ENCODE measurements at regions of chr2 and their contacts with region 1.

Region 1: DNA sequence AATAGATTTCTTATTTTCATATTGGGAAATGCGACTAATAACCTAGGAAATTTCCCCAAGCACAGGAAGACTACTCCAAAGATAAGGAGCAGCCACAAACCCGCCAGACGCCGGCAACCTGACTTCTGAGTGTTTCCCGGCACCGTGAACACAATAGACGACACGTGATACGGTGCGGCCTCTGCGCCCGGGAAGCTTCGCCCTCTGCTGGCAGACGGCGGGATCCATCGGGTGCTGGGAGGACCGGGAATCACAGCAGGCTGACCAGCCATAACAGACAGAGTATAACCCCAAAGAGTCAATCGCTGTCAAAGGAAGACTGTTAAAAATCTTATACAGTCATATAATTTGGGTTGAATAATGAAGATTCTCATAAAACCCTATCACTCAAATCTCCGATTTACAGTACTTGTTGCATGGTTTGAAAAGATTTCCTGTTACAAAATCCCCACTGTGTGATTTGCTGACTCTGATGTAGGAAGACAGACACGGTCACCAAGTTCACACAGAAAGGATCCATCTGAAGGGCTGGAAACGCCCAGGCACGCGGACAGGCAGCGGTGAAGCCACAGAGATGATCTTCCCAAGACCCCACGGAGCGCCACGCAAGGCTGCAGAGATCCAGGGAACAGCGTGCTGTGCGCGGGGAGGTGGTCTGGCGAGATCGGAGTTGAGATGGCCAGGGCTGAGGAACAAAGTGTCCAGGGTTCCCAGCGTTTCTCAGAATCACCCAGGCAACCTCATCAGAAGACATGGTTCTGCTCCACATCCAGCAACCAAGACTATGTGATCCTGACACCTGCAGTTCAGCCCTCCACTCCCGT is 73.8 kb downstream of the EIPR1 start:
- DNase-seq: peak; percentile 90
- H3K4me3 Mint-ChIP-seq: peak overlapping the region; percentile 21
- H3K27ac Mint-ChIP-seq: peak overlapping the region; percentile 63
- H3K4me1 Mint-ChIP-seq: peaks cover 21% of the 10 kb centered on the region
- H3K27me3 Mint-ChIP-seq: no peaks in the 10 kb centered on the region

Region 2: DNA sequence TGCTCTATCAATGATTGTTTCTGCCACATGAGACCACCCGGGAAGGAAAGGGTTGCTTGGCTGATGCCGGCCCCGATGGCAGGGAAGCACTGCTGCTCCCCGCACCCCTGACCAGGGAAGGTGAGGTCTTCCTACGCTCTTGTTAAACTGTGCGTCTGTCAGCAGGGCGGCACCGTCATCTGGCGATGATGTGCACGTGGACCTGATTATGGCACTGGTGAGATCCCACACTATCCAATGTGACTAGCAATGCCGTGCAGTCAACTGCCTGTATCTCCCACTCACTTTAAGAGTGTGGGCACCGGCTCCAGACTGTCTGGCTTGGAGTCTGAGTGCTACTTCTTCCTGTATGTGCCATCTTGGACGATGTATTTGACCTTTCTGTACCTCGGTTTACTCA is 1181.9 kb before region 1 on chr2:
- CTCF ChIA-PET with region 1: no interaction called
- intact Hi-C with region 1: loop called (anchors 5 kb)
- DNase-seq: no peak
- H3K4me3 Mint-ChIP-seq: no peak overlapping the region
- H3K27ac Mint-ChIP-seq: no peak overlapping the region
- H3K4me1 Mint-ChIP-seq: peaks cover 4% of the 10 kb centered on the region
- H3K27me3 Mint-ChIP-seq: peaks cover 3% of the 10 kb centered on the region

Region 3: GRCh38 chr2:3001615-3002560 is 301.9 kb before region 1 on chr2:
- CTCF ChIA-PET with region 1: no interaction called
- intact Hi-C with region 1: loop called (anchors 2 kb)
- DNase-seq: no peak
- H3K4me3 Mint-ChIP-seq: no peak overlapping the region
- H3K27ac Mint-ChIP-seq: no peak overlapping the region
- H3K4me1 Mint-ChIP-seq: peaks cover 3% of the 10 kb centered on the region
- H3K27me3 Mint-ChIP-seq: peaks cover 30% of the 10 kb centered on the region

Region 4: DNA sequence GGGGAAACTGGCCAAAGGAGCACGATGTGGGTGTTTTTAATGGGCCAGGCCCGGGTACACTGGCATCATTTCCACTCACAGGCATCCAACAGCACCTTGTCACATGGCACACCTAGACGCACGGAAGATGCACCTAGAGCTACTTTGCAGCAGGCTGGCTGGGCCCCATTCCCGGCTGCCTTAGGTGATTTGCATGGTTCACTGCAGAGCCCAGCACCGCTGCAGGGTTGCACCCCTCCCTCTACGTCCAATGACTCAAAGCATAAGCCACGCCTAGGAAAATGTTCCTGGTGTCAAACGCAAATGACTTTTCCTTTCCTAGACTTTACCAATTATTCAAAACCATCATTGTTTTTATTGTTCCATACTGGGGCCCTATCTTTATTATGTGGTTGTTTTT is 149.1 kb before region 1 on chr2:
- CTCF ChIA-PET with region 1: no interaction called
- intact Hi-C with region 1: no loop called
- DNase-seq: no peak
- H3K4me3 Mint-ChIP-seq: no peak overlapping the region
- H3K27ac Mint-ChIP-seq: no peak overlapping the region
- H3K4me1 Mint-ChIP-seq: no peaks in the 10 kb centered on the region
- H3K27me3 Mint-ChIP-seq: no peaks in the 10 kb centered on the region

Region 5: GRCh38 chr2:3198119-3198518 is 105.7 kb before region 1 on chr2:
- CTCF ChIA-PET with region 1: interaction called, 4 read pairs
- intact Hi-C with region 1: loop called (anchors 1 kb)
- DNase-seq: peak; percentile 27
- H3K4me3 Mint-ChIP-seq: no peak overlapping the region
- H3K27ac Mint-ChIP-seq: no peak overlapping the region
- H3K4me1 Mint-ChIP-seq: peaks cover 5% of the 10 kb centered on the region
- H3K27me3 Mint-ChIP-seq: no peaks in the 10 kb centered on the region

Region 6: GRCh38 chr2:3242747-3243369 is 60.9 kb before region 1 on chr2:
- CTCF ChIA-PET with region 1: no interaction called
- intact Hi-C with region 1: loop called (anchors 5 kb)
- DNase-seq: peak; percentile 72
- H3K4me3 Mint-ChIP-seq: no peak overlapping the region
- H3K27ac Mint-ChIP-seq: peak overlapping the region; percentile 32
- H3K4me1 Mint-ChIP-seq: peaks cover 9% of the 10 kb centered on the region
- H3K27me3 Mint-ChIP-seq: no peaks in the 10 kb centered on the region